ENCODE measurements at regions of chr1 and their contacts with region 1.

Region 1: DNA sequence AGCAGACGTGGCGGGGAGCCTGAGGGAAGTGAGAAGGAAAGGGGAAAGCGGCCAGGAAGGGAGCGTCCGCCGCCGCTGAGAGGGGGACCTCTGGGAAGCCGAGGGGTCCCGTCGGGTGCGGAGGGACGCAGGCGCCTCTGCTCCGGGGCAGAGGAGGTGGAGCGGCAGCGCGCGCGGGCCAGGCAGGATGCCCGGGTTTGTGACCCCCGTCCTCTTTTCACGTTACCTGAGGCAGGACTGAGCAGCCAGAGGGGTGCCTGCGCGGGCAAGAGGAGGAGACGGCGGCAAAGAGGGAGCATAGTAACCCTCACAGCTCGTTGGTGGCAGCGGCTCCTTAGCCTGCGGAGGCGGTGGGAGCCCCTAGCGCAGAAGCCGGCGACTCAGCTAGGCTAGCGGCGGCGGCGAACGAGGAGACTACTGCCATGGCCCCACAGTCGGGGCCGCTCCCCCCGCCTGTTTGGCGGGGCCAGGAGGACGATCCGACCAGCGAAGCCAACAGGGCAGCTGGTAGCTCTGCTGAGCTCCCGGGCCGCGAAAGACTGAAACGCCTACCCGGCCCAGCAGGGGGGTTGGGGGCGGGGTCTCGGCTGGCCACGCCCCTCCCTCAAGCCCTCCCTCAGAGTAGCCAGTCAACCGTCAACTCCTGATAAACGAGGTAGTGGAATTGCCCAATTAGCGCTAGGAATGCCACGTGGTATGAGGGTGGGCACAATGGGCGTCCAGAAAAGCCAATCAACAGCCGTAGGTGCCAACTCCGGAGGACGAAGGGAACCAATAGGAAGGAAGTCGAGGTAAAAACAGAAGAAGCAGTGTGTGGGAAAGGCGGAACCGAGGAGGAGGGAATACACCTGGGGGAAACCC is at the start of gene TESK2:
- DNase-seq: peak; percentile 97
- ATAC-seq: peak; percentile 98
- H3K4me3 ChIP-seq: peak within 1 kb of the TSS; percentile 81
- H3K27ac ChIP-seq: peak within 1 kb of the TSS; percentile 74
- H3K4me1 ChIP-seq: peaks cover 9% of the 10 kb centered on the region
- H3K27me3 ChIP-seq: no peaks in the 10 kb centered on the region
- CTCF ChIP-seq: peak; percentile 14
- total RNA-seq, gene TESK2: 8.4 TPM

Region 2: DNA sequence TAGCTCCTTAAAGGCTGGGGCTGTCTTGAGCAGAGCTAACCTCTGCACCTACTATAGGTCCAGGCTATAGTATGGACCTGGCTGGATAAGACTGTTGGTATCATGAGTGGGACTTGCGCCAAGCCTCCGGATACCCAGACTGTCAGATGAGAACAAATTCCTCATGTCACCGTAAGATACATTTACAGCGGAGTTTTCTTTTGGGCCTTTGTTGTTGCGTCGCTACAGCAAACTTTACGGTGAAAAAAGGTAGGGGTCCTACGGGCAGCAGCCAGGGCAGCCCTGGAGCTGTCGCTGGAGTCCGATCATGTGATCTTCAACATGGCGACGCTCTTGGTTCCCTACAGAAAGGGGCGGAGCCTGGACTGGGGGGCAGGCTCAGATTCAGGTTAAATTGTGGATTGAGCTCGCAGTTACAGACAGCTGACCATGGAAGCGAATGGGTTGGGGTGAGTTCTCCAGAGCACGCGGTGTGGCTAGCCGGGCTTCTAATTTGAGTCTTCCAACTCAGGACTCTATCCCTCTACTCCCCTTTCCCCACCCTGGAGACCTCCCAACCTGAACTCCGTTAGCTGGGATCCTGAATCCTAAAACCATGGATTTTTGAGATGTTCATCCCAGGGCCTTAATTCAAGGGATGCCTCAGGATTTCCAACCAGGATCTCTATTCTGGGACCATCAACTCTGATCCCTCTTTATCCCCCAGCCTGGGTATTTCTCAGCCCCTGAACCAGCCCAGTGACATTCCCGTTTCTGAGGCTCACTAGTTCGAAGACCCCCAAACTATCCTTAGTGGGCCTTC is 478.8 kb before region 1 on chr1 and contains the start of gene UROD:
- intact Hi-C with region 1: loop called (anchors 10 kb)
- DNase-seq: peak; percentile 94
- ATAC-seq: peak; percentile 92
- H3K4me3 ChIP-seq: peak within 1 kb of the TSS; percentile 100
- H3K27ac ChIP-seq: peak within 1 kb of the TSS; percentile 83
- H3K4me1 ChIP-seq: peaks cover 22% of the 10 kb centered on the region
- H3K27me3 ChIP-seq: no peaks in the 10 kb centered on the region
- CTCF ChIP-seq: no peak
- total RNA-seq, gene UROD: 51.4 TPM

Region 3: DNA sequence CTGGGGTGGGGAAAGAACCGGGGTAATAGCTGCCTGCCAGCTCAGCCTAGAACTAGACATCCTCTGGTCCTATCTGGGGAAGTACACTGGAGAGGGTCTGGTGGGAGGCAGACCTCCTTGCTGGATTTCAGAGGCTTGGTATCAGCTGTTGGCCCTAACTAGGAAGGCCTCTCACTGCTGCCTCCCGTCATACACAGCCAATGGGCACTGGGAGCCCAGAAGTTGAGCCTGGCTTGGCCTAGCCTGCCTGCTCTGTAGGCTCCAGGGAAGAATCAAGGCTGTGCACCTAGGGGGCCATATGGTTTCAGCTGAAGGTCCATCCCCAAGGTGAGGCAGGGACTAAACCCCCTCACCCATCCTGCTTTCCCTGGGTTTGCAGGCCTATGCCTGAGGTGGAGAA is 146.4 kb before region 1 on chr1:
- intact Hi-C with region 1: no loop called
- DNase-seq: no peak
- ATAC-seq: no peak
- H3K4me3 ChIP-seq: no peak overlapping the region
- H3K27ac ChIP-seq: no peak overlapping the region
- H3K4me1 ChIP-seq: peaks cover 32% of the 10 kb centered on the region
- H3K27me3 ChIP-seq: no peaks in the 10 kb centered on the region
- CTCF ChIP-seq: no peak

Region 4: DNA sequence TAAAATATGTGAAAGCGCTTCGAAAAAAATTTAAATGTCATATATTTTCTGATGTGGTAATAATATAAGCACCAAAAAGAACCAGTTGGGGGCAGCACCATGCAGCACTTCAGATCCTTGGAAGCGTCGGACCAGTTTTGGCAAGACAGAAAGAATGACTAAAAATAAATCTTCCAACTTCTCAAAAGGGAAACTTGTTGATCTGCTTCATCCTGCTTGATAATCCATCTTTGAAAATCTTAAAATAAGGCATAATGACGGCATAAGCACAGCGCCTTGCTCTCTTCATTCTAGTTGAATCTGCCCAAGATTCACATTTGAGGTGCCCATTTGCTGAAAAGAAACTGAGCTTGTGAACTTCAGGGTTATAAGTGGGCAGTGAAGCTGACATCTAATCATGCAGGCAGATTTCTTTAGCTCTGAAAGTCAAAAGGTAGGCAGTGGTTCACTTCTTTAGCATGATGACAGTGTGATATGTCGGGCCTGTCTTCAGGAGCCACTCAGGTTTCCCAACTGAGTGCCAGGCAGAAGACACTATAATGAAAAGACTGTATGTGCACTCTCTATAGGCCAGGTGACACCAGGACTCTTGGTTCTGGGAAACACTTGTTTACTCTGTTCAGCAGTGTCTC is 130.9 kb before region 1 on chr1:
- intact Hi-C with region 1: loop called (anchors 10 kb)
- DNase-seq: no peak
- ATAC-seq: peak; percentile 84
- H3K4me3 ChIP-seq: no peak overlapping the region
- H3K27ac ChIP-seq: peak overlapping the region; percentile 72
- H3K4me1 ChIP-seq: peaks cover 14% of the 10 kb centered on the region
- H3K27me3 ChIP-seq: no peaks in the 10 kb centered on the region
- CTCF ChIP-seq: peak; percentile 74

Region 5: GRCh38 chr1:45573231-45573804 is 82.5 kb after region 1 on chr1:
- intact Hi-C with region 1: no loop called
- DNase-seq: peak; percentile 23
- ATAC-seq: no peak
- H3K4me3 ChIP-seq: no peak overlapping the region
- H3K27ac ChIP-seq: no peak overlapping the region
- H3K4me1 ChIP-seq: no peaks in the 10 kb centered on the region
- H3K27me3 ChIP-seq: no peaks in the 10 kb centered on the region
- CTCF ChIP-seq: no peak